ENCODE measurements at regions of chr5 and their contacts with region 1.

Region 1: GRCh38 chr5:177071666-177072385 is 14.9 kb upstream of the FGFR4 start:
- DNase-seq: peak; percentile 84
- ATAC-seq: peak; percentile 84
- H3K4me3 Mint-ChIP-seq: no peak overlapping the region
- H3K27ac Mint-ChIP-seq: no peak overlapping the region
- H3K4me1 Mint-ChIP-seq: peaks cover 11% of the 10 kb centered on the region
- H3K27me3 Mint-ChIP-seq: no peaks in the 10 kb centered on the region

Region 2: DNA sequence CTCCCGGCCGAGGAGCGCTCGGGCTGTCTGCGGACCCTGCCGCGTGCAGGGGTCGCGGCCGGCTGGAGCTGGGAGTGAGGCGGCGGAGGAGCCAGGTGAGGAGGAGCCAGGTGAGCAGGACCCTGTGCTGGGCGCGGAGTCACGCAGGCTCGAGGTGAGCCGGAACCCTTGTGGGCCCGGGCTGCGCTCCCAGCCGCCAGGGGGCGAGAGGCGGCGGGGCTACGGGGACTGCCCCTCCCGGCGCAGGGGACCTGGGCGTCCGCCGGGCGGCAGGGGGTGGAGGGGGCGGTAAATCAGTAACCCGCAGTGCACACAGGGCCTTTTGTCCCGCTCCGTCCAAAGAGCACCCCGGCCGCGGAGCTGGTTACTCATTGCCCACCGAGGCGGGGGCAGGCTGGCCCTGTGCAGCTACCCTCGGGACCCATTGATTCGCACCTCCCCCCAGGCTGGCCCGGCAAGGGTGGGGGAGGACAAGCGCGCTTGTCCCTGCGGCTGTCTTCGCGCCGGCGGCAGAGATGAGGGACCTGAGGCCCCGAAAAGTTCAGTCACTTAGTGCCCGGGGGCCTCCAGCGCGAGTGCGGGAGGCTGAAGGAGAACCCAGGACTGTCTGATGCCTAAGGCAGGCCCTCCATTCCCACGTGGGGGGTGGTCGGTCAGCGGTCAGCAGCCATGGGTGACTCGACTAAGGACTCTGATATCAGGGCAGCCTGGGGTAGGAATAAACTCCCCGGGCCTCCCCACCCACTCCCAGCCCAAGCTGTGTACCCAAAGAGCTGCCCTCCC is 15.3 kb after region 1 on chr5:
- CTCF ChIA-PET with region 1: interaction called, 70 read pairs
- POLR2A ChIA-PET with region 1: no interaction called
- DNase-seq: peak; percentile 62
- ATAC-seq: peak; percentile 86
- H3K4me3 Mint-ChIP-seq: no peak overlapping the region
- H3K27ac Mint-ChIP-seq: no peak overlapping the region
- H3K4me1 Mint-ChIP-seq: peaks cover 4% of the 10 kb centered on the region
- H3K27me3 Mint-ChIP-seq: peaks cover 36% of the 10 kb centered on the region

Region 3: GRCh38 chr5:177154003-177154643 is 82.3 kb after region 1 on chr5:
- CTCF ChIA-PET with region 1: no interaction called
- POLR2A ChIA-PET with region 1: no interaction called
- DNase-seq: no peak
- ATAC-seq: no peak
- H3K4me3 Mint-ChIP-seq: no peak overlapping the region
- H3K27ac Mint-ChIP-seq: no peak overlapping the region
- H3K4me1 Mint-ChIP-seq: no peaks in the 10 kb centered on the region
- H3K27me3 Mint-ChIP-seq: no peaks in the 10 kb centered on the region